ENCODE measurements at regions of chr15 and their contacts with region 1.

Region 1: DNA sequence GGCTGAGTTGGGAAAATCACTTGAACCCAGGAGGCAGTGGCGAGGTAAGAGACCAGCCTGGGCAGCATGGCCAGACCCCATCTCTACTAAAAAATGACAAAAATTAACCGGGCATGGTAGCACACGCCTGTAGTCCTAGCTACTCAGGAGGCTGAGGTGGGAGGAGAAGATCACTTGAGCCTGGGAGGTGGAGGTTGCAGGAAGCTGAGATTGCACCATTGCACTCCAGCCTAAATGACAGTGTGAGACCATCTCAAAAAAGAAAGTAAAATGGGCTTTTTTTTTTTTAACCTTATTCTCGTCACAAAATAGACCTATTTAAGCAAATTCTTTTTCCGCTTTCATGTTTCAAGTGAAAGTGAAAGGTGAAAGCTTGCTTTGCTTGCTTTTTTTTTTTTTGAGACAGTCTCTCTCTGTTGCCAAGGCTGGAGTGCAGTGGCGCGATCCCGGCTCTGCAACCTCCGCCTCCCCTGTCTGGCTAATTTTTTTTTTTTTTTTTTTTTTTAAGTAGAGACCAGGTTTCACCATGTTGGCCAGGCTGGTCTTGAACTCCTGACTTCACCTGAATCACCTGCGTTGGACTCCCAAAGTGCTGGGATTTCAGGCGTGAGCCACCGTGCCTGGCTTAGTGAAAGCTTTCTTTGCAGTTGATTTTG is 3.6 kb downstream of the PDIA3 start:
- DNase-seq: peak; percentile 45 to 76 (median 70)
- H3K4me3 ChIP-seq: peak overlapping the region in 1 of 7 experiments; percentile 25
- H3K27ac ChIP-seq: no peak overlapping the region
- H3K4me1 ChIP-seq: peaks cover 0 to 24% (median 12%) of the 10 kb centered on the region in 4 experiments
- H3K27me3 ChIP-seq: no peaks in the 10 kb centered on the region

Region 2: GRCh38 chr15:43769584-43770228 is 19.9 kb after region 1 on chr15:
- CTCF ChIA-PET with region 1: interaction called, 12 read pairs
- POLR2A ChIA-PET with region 1: no interaction called
- DNase-seq: peak; percentile 64 to 78 (median 74)
- H3K4me3 ChIP-seq: no peak overlapping the region
- H3K27ac ChIP-seq: no peak overlapping the region
- H3K4me1 ChIP-seq: no peaks in the 10 kb centered on the region
- H3K27me3 ChIP-seq: no peaks in the 10 kb centered on the region